SK-N-SH (cell line): ENCODE measurements at regions of chr2 and their contacts with region 1.

Region 1: GRCh38 chr2:205925373-205926337 is 160.3 kb downstream of the INO80D start:
- DNase-seq: peak; percentile 88
- H3K4me3 ChIP-seq: peak overlapping the region; percentile 23 to 59
- H3K27ac ChIP-seq: no peak overlapping the region
- H3K4me1 ChIP-seq: peaks cover 5% of the 10 kb centered on the region in 2 experiments; a peak in 2 of 4 replicates
- H3K27me3 ChIP-seq: peaks cover 14% of the 10 kb centered on the region; the same call in 1 of the 2 replicates
- CTCF ChIP-seq: peak; percentile 94
- EP300 ChIP-seq: no peak
- RAD21 ChIP-seq: peak; percentile 97

Region 2: DNA sequence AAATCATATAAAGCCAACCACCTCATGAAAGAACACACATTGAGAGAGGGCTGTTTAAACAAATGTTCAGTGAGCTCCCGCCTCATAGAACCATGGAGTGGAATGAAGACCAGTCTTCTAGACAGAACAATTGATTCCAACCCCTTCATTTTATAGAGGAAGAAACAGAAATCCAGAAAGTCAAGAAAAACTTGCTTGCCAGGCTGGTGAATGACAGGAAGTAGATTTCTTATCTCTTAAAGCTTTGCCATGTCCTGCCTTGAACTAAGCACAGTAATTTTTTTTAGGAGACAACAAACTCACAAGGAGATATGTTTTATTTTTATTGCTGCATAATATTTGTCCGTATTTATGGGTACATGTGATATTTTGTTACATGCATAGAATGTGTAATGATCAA is 259.8 kb before region 1 on chr2:
- CTCF ChIA-PET with region 1: no interaction called
- POLR2A ChIA-PET with region 1: no interaction called
- DNase-seq: no peak
- H3K4me3 ChIP-seq: no peak overlapping the region
- H3K27ac ChIP-seq: no peak overlapping the region
- H3K4me1 ChIP-seq: peaks cover 0 to 6% of the 10 kb centered on the region in 2 experiments; a peak in 2 of 4 replicates
- H3K27me3 ChIP-seq: no peaks in the 10 kb centered on the region
- CTCF ChIP-seq: no peak
- EP300 ChIP-seq: no peak
- RAD21 ChIP-seq: no peak

Region 3: DNA sequence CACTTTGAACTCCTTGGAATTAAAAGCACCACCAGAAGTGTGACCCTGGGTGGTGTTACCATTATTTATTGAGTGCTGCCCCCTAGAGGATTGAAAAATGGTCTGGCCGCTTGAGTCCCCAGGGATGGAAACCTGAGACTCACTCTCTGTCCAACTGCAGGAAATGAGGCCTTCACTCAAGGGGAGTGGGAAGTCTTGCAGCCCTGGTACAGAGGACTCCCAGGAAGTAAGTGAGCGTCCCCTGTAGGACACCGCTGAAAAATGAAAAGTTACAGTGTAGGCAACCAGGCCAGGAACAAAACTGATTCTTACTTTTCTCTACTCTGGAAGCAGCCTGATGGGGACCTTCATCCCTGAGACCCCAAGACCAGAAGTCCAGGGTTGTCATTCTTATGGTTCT is 245.6 kb before region 1 on chr2:
- CTCF ChIA-PET with region 1: interaction called, 23 read pairs
- POLR2A ChIA-PET with region 1: no interaction called
- DNase-seq: peak; percentile 70
- H3K4me3 ChIP-seq: peak overlapping the region in 1 of 2 experiments; percentile 2; a peak in 1 of 4 replicates
- H3K27ac ChIP-seq: peak overlapping the region; percentile 17 to 34; a peak in 2 of 4 replicates
- H3K4me1 ChIP-seq: peaks cover 17 to 27% of the 10 kb centered on the region in 2 experiments
- H3K27me3 ChIP-seq: no peaks in the 10 kb centered on the region
- CTCF ChIP-seq: peak; percentile 82
- EP300 ChIP-seq: no peak
- RAD21 ChIP-seq: peak; percentile 78

Region 4: GRCh38 chr2:205721057-205721449 is 204.6 kb before region 1 on chr2:
- CTCF ChIA-PET with region 1: interaction called, 11 read pairs
- POLR2A ChIA-PET with region 1: no interaction called
- DNase-seq: no peak
- H3K4me3 ChIP-seq: no peak overlapping the region
- H3K27ac ChIP-seq: no peak overlapping the region
- H3K4me1 ChIP-seq: peaks cover 3 to 10% of the 10 kb centered on the region in 2 experiments; a peak in 1 of 4 replicates
- H3K27me3 ChIP-seq: no peaks in the 10 kb centered on the region
- CTCF ChIP-seq: peak; percentile 52
- EP300 ChIP-seq: no peak
- RAD21 ChIP-seq: 0 out of 2 replicates have a peak, but pooled peaks have one; percentile 8

Region 5: DNA sequence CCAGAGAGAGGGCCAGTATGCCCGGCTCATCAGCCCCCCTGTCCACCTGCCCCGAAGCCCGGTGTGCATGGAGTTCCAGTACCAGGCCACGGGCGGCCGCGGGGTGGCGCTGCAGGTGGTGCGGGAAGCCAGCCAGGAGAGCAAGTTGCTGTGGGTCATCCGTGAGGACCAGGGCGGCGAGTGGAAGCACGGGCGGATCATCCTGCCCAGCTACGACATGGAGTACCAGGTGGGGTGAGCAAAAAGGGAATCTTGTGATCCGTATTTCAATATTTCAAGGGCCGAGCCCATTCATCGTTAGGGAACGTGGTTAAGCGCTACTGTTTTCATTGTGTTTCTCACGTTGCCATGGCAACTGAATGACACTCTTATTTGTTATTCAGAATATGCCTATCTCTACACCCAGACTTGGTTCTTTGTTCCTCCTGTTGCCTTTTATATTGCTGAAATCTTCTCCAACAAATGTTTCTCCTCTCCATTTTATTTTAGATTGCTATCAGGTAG is 161.9 kb before region 1 on chr2:
- CTCF ChIA-PET with region 1: interaction called, 31 read pairs
- POLR2A ChIA-PET with region 1: no interaction called
- DNase-seq: peak; percentile 43
- H3K4me3 ChIP-seq: peak overlapping the region in 1 of 2 experiments; percentile 46; a peak in 1 of 4 replicates
- H3K27ac ChIP-seq: peak overlapping the region in 1 of 2 experiments; percentile 32; a peak in 1 of 4 replicates
- H3K4me1 ChIP-seq: peaks cover 5 to 38% of the 10 kb centered on the region in 2 experiments; a peak in 3 of 4 replicates
- H3K27me3 ChIP-seq: no peaks in the 10 kb centered on the region
- CTCF ChIP-seq: no peak
- EP300 ChIP-seq: no peak
- RAD21 ChIP-seq: no peak

Region 6: DNA sequence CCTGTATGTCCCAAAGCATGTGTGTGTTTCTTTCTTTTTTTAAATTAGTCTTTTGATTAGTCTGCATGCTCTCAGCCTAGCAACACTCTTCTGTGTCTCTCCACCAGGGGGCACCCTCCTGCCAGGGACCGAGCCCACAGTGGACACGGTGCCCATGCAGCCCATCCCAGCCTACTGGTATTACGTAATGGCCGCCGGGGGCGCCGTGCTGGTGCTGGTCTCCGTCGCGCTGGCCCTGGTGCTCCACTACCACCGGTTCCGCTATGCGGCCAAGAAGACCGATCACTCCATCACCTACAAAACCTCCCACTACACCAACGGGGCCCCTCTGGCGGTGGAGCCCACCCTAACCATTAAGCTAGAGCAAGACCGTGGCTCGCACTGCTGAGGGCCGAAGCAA is 149.5 kb before region 1 on chr2:
- CTCF ChIA-PET with region 1: interaction called, 78 read pairs
- POLR2A ChIA-PET with region 1: no interaction called
- DNase-seq: peak; percentile 61
- H3K4me3 ChIP-seq: no peak overlapping the region
- H3K27ac ChIP-seq: no peak overlapping the region
- H3K4me1 ChIP-seq: peaks cover 9 to 10% of the 10 kb centered on the region in 2 experiments
- H3K27me3 ChIP-seq: no peaks in the 10 kb centered on the region
- CTCF ChIP-seq: peak; percentile 62
- EP300 ChIP-seq: no peak
- RAD21 ChIP-seq: peak; percentile 70

Region 7: GRCh38 chr2:205903638-205904037 is 22.0 kb before region 1 on chr2:
- CTCF ChIA-PET with region 1: interaction called, 30 read pairs
- POLR2A ChIA-PET with region 1: interaction called, 3 read pairs
- DNase-seq: peak; percentile 57
- H3K4me3 ChIP-seq: no peak overlapping the region
- H3K27ac ChIP-seq: no peak overlapping the region
- H3K4me1 ChIP-seq: peaks cover 0 to 13% of the 10 kb centered on the region in 2 experiments; a peak in 2 of 4 replicates
- H3K27me3 ChIP-seq: no peaks in the 10 kb centered on the region
- CTCF ChIP-seq: peak; percentile 34; the same call in 1 of the 2 replicates
- EP300 ChIP-seq: no peak
- RAD21 ChIP-seq: peak; percentile 47

Region 8: GRCh38 chr2:205947621-205948495 is 22.2 kb after region 1 on chr2:
- CTCF ChIA-PET with region 1: interaction called, 30 read pairs
- POLR2A ChIA-PET with region 1: no interaction called
- DNase-seq: peak; percentile 79
- H3K4me3 ChIP-seq: peak overlapping the region in 1 of 2 experiments; percentile 49; a peak in 1 of 4 replicates
- H3K27ac ChIP-seq: no peak overlapping the region
- H3K4me1 ChIP-seq: no peaks in the 10 kb centered on the region
- H3K27me3 ChIP-seq: no peaks in the 10 kb centered on the region
- CTCF ChIP-seq: peak; percentile 96
- EP300 ChIP-seq: no peak
- RAD21 ChIP-seq: peak; percentile 90

Region 9: GRCh38 chr2:206502729-206503128 is 577.1 kb after region 1 on chr2:
- CTCF ChIA-PET with region 1: no interaction called
- POLR2A ChIA-PET with region 1: no interaction called
- DNase-seq: no peak
- H3K4me3 ChIP-seq: no peak overlapping the region
- H3K27ac ChIP-seq: no peak overlapping the region
- H3K4me1 ChIP-seq: no peaks in the 10 kb centered on the region
- H3K27me3 ChIP-seq: no peaks in the 10 kb centered on the region
- CTCF ChIP-seq: no peak
- EP300 ChIP-seq: no peak
- RAD21 ChIP-seq: no peak